ENCODE measurements at regions of chr5 and their contacts with region 1.

Region 1: GRCh38 chr5:172322028-172322965 is 38.7 kb upstream of the UBTD2 start:
- DNase-seq: no peak
- H3K4me3 ChIP-seq: no peak overlapping the region
- H3K27ac ChIP-seq: no peak overlapping the region
- H3K4me1 ChIP-seq: peaks cover 7% of the 10 kb centered on the region; the same call in 1 of the 2 replicates
- H3K27me3 ChIP-seq: no peaks in the 10 kb centered on the region
- CTCF ChIP-seq: no peak

Region 2: GRCh38 chr5:172144291-172144815 is 177.9 kb before region 1 on chr5:
- CTCF ChIA-PET with region 1: no interaction called
- POLR2A ChIA-PET with region 1: interaction called, 12 read pairs
- intact Hi-C with region 1: no loop called
- DNase-seq: no peak
- H3K4me3 ChIP-seq: no peak overlapping the region
- H3K27ac ChIP-seq: no peak overlapping the region
- H3K4me1 ChIP-seq: no peaks in the 10 kb centered on the region
- H3K27me3 ChIP-seq: no peaks in the 10 kb centered on the region
- CTCF ChIP-seq: no peak

Region 3: DNA sequence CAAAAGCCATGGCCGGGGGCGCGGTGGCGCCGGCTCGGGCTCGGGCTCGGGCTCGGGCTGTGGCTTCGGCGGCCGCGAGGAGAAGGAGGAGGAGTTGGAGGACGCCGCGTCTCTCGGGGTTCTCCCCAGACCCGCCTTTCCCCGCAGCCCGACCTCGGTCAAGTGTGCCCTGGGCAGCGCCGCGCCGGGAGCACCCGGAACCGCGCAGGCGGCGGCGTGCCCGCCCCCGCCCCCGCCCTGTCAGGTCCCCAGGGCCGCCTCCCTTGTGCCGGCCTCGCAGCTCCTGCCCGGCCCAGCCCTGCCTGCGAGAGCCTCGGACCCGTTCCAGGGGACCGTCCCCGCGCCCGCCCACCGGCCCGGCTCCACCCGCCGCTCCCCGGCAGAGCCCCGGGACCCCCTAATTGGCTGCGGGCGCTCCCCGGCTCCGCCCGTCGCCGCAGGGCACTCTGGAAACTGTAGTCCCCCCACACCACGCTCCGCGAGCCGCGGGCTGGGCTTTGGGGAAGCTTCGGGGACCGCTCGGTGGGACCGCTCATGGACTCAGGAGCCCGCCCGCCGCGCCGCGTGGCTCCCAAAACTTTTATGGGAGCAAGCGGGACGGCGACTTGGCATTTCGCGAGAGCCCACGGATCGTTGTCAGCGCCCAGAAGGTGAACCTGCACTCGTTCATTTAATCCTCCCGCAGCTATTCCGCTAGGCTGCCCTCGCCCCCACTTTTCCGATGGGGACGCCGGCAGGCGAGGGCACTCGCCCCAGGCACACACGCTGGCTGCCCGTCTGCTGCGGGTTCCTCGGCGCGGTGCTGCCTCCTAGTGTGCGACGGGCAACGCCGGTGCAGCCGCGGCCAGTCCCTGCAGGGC is 134.0 kb before region 1 on chr5 and contains the start of gene STK10:
- CTCF ChIA-PET with region 1: no interaction called
- POLR2A ChIA-PET with region 1: no interaction called
- intact Hi-C with region 1: no loop called
- DNase-seq: peak; percentile 71 to 93
- H3K4me3 ChIP-seq: peak within 1 kb of the TSS; percentile 67
- H3K27ac ChIP-seq: peak within 1 kb of the TSS; percentile 65
- H3K4me1 ChIP-seq: peaks cover 21% of the 10 kb centered on the region
- H3K27me3 ChIP-seq: no peaks in the 10 kb centered on the region
- CTCF ChIP-seq: peak; percentile 81
- total RNA-seq, gene STK10: 23.3 and 31.5 TPM in 2 replicates